CD4-positive, alpha-beta T cell (primary cell): ENCODE measurements at regions of chr17 and their contacts with region 1.

Region 1: GRCh38 chr17:36948717-36949460 is at the start of gene AATF:
- DNase-seq: peak; percentile 89 to 99 (median 95)
- ATAC-seq: peak; percentile 93
- H3K4me3 ChIP-seq: peak within 1 kb of the TSS; percentile 81
- H3K4me3 Mint-ChIP-seq: peak within 1 kb of the TSS; percentile 88
- H3K27ac ChIP-seq: peak within 1 kb of the TSS; percentile 62 to 74
- H3K27ac Mint-ChIP-seq: peak within 1 kb of the TSS; percentile 84
- H3K4me1 ChIP-seq: peaks cover 36% of the 10 kb centered on the region
- H3K4me1 Mint-ChIP-seq: peaks cover 70% of the 10 kb centered on the region
- H3K27me3 ChIP-seq: peaks cover 29 to 34% of the 10 kb centered on the region in 2 experiments
- H3K27me3 Mint-ChIP-seq: peaks cover 46% of the 10 kb centered on the region
- CTCF ChIP-seq: no peak
- total RNA-seq, gene AATF: 40.3 to 40.8 TPM

Region 2: DNA sequence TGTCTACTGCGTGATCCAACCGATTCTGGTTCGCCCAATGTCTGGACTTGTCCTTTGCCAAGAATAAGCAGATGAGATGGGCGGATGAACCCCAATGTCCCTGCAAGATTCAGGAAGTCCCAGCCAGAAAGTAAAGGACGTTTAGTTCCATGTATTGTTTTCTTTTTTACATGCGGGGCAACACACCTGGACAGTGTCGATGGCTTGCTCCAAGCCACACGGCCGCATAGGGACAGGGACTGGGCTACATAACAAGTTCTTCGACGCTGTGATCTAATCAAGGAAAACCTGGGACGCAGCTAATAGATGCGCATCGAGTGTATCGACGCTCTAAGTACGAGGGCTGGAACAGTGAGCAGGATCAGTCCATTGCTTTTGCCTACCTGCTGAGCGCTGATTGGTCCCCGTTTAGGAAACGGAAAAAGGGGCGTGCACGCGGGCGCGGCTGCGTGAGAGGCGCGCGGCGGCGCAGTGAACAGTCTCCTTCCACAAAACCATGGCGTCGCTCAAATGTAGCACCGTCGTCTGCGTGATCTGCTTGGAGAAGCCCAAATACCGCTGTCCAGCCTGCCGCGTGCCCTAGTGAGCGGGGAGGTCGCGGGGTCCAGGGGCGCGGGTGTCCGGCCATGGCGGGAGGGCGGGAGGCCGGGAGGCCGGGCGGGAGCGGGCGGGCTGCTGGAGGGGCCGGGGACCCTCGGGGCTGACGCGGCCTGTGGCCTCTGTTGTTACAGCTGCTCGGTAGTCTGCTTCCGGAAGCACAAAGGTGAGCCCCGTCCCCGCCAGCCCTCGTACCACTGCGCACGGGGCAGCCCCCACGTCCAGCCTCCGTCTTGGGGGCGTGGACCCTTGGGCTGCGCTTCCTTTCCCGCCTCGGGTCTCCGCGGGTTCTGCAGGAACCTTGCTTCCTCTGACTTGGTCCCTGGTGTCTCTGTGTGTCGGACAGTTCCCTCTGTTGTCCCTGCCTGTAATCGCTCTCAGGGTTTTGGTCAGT is 462.4 kb before region 1 on chr17 and contains the start of gene ZNHIT3:
- CTCF ChIA-PET with region 1: no interaction called
- POLR2A ChIA-PET with region 1: no interaction called
- intact Hi-C with region 1: loop called in 1 of 2 experiments (anchors 5 kb)
- DNase-seq: peak; percentile 81 to 96 (median 86)
- ATAC-seq: peak; percentile 95
- H3K4me3 ChIP-seq: peak within 1 kb of the TSS; percentile 99
- H3K4me3 Mint-ChIP-seq: peak within 1 kb of the TSS; percentile 99
- H3K27ac ChIP-seq: peak within 1 kb of the TSS; percentile 41 to 60
- H3K27ac Mint-ChIP-seq: peak within 1 kb of the TSS; percentile 88
- H3K4me1 ChIP-seq: peaks cover 52% of the 10 kb centered on the region
- H3K4me1 Mint-ChIP-seq: peaks cover 44% of the 10 kb centered on the region
- H3K27me3 ChIP-seq: peaks cover 8 to 10% of the 10 kb centered on the region in 2 experiments
- H3K27me3 Mint-ChIP-seq: peaks cover 10% of the 10 kb centered on the region
- CTCF ChIP-seq: no peak
- total RNA-seq, gene ZNHIT3: 70.2 to 73.9 TPM

Region 3: DNA sequence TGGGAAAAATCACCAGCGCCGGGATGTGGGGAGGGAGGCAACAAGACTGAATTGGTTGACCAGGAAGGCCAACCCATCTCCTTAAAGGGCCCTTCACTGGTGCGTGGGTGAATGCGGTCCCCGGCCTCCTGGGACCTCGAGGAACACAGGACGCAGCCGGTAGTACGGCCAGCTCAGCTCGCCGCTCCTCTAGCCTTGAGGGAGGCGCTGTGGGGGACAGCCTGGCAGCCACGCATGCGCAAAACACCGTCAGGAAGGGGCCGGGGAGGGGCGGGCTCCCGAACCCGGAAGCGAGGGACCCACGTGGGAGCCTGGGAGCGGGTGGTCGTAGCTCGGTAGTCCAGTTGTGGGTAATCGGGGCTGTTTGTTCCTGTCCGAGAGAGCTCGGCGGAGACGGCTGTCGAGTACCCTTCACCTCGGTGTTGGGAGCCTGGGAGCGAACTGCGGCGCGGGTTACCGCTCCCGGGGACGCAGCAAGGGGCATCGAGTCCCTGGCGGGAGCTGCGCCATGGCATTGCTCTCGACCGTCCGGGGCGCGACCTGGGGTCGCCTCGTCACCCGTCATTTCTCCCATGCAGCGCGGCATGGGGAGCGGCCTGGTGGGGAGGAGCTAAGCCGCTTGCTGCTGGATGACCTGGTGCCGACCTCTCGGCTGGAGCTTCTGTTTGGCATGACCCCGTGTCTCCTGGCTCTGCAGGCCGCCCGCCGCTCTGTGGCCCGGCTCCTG is 347.4 kb before region 1 on chr17 and contains the start of gene MRM1:
- CTCF ChIA-PET with region 1: no interaction called
- POLR2A ChIA-PET with region 1: interaction called, 13 read pairs
- intact Hi-C with region 1: no loop called
- DNase-seq: peak; percentile 80 to 94 (median 87)
- ATAC-seq: peak; percentile 74
- H3K4me3 ChIP-seq: peak within 1 kb of the TSS; percentile 89
- H3K4me3 Mint-ChIP-seq: peak within 1 kb of the TSS; percentile 97
- H3K27ac ChIP-seq: peak within 1 kb of the TSS; percentile 57 to 65
- H3K27ac Mint-ChIP-seq: peak within 1 kb of the TSS; percentile 94
- H3K4me1 ChIP-seq: peaks cover 31% of the 10 kb centered on the region
- H3K4me1 Mint-ChIP-seq: peaks cover 47% of the 10 kb centered on the region
- H3K27me3 ChIP-seq: no peaks in the 10 kb centered on the region
- H3K27me3 Mint-ChIP-seq: no peaks in the 10 kb centered on the region
- CTCF ChIP-seq: no peak
- total RNA-seq, gene MRM1: 0.81 to 1.1 TPM

Region 4: DNA sequence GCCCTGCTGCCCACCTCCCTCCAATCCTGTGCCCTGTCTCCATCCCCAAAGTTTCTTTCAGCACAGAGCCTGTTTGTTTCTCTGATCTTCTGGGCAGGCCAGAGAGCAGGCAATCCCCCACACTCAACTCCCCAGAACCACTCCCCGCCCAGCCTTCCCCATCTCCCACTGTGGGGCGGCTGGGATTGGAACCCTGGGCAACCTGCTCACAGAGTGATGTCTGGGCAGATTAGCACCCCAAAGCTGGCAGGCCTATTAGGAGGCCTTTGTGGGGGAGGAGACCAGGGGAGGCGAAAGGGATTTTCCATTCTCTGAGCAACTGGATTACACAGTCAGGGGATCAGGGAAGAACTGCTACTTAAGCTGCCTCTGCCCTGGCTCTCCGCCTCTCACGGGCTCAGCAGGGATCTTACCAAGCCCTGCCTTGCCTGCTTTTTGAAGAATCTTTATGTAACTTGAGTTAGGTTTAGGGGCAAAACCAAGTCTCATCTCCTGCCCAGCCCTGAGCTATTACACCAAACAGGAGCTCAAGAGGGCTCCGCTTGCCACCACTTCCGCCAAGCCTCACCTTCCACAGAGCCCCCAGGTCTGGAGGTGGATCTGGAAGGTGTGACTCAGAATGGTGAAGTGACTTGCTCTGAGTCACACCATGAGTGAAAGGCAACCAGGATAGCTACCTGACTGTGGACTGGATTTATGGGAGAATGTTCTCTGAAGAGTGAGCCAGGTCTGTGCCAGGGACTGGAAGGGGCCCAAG is 27.6 kb before region 1 on chr17:
- CTCF ChIA-PET with region 1: no interaction called
- POLR2A ChIA-PET with region 1: no interaction called
- intact Hi-C with region 1: no loop called
- DNase-seq: no peak
- ATAC-seq: no peak
- H3K4me3 ChIP-seq: no peak overlapping the region
- H3K4me3 Mint-ChIP-seq: no peak overlapping the region
- H3K27ac ChIP-seq: no peak overlapping the region
- H3K27ac Mint-ChIP-seq: no peak overlapping the region
- H3K4me1 ChIP-seq: no peaks in the 10 kb centered on the region
- H3K4me1 Mint-ChIP-seq: no peaks in the 10 kb centered on the region
- H3K27me3 ChIP-seq: peaks cover 20 to 28% of the 10 kb centered on the region in 2 experiments
- H3K27me3 Mint-ChIP-seq: peaks cover 73% of the 10 kb centered on the region
- CTCF ChIP-seq: no peak

Region 5: GRCh38 chr17:36931697-36932382 is 17.0 kb before region 1 on chr17:
- CTCF ChIA-PET with region 1: interaction called, 3 read pairs
- POLR2A ChIA-PET with region 1: interaction called, 13 read pairs
- intact Hi-C with region 1: loop called in 1 of 2 experiments (anchors 2 kb)
- DNase-seq: peak in 3 of 14 experiments; percentile 3 to 35 (median 24)
- ATAC-seq: no peak
- H3K4me3 ChIP-seq: no peak overlapping the region
- H3K4me3 Mint-ChIP-seq: peak overlapping the region; percentile 61
- H3K27ac ChIP-seq: no peak overlapping the region
- H3K27ac Mint-ChIP-seq: no peak overlapping the region
- H3K4me1 ChIP-seq: peaks cover 61% of the 10 kb centered on the region
- H3K4me1 Mint-ChIP-seq: peaks cover 66% of the 10 kb centered on the region
- H3K27me3 ChIP-seq: peaks cover 94 to 98% of the 10 kb centered on the region in 2 experiments
- H3K27me3 Mint-ChIP-seq: peaks cover 96% of the 10 kb centered on the region
- CTCF ChIP-seq: no peak

Region 6: DNA sequence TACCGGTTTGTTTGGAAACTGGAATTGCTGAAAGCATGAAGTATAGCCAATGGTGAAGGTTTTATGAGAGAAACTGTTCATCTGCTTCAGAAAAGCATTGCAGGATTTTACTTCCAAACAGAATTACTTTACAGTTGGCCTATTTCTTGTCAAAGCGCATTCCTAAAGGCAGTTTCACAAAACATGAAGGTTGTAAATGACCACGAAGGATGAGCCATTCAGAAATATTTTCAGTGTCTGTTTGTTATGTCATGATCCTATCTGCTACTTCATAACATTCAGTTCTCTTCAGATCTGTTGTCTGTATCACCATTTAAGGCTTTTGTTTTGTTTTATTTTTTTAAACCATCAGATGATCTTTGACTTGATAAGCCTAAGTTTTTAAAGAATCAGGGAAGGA is 45.5 kb after region 1 on chr17:
- CTCF ChIA-PET with region 1: no interaction called
- POLR2A ChIA-PET with region 1: no interaction called
- intact Hi-C with region 1: no loop called
- DNase-seq: no peak
- ATAC-seq: no peak
- H3K4me3 ChIP-seq: no peak overlapping the region
- H3K4me3 Mint-ChIP-seq: no peak overlapping the region
- H3K27ac ChIP-seq: no peak overlapping the region
- H3K27ac Mint-ChIP-seq: no peak overlapping the region
- H3K4me1 ChIP-seq: no peaks in the 10 kb centered on the region
- H3K4me1 Mint-ChIP-seq: peaks cover 6% of the 10 kb centered on the region
- H3K27me3 ChIP-seq: no peaks in the 10 kb centered on the region
- H3K27me3 Mint-ChIP-seq: no peaks in the 10 kb centered on the region
- CTCF ChIP-seq: no peak

Region 7: DNA sequence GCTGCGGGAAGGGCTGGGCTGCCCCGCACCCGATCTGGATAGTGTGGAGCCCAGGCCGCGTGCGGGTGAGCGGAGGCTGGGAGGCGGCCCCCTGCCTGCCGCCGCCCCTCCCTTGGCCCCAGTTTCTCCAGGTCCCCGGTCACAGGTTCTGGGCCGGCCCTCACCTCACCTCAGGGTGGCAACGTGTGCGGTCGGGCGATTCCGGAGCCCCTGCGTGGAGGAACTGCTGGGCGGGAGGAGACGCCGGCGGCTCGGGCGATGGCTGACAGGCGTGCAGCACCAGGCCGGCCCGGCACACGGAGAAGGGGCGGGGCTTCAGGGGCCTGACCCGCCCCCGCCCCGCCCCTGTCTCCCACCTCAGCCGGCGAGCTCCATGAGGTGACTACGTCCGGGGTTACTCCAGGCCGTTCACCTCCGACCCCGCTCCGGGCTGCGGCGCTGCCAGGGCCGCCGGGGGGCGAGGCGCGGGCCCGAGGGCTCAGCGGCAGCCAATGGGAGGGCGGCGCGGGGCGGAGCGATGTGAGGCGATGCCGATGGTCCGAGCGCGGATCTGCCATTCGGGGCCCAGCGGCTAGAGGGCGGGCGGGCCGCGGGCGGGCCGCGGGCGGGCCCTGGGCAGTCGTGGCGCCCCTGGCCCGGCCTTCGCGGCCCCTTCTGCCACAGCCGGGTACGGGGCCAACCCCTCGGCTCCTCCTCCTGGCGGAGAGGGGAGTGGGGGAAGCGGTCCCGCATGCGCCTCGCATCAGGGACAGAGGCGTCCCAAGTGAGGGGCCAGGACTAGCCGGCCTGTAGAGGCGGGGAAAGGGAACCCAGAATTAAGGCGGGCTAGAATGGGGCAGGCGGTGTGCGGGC is 410.2 kb after region 1 on chr17:
- CTCF ChIA-PET with region 1: no interaction called
- POLR2A ChIA-PET with region 1: no interaction called
- intact Hi-C with region 1: loop called in 1 of 2 experiments (anchors 5 kb)
- DNase-seq: peak; percentile 73 to 96 (median 84)
- ATAC-seq: peak; percentile 95
- H3K4me3 ChIP-seq: peak overlapping the region; percentile 74
- H3K4me3 Mint-ChIP-seq: peak overlapping the region; percentile 93
- H3K27ac ChIP-seq: peak overlapping the region; percentile 41 to 63
- H3K27ac Mint-ChIP-seq: peak overlapping the region; percentile 89
- H3K4me1 ChIP-seq: peaks cover 16% of the 10 kb centered on the region
- H3K4me1 Mint-ChIP-seq: peaks cover 22% of the 10 kb centered on the region
- H3K27me3 ChIP-seq: no peaks in the 10 kb centered on the region
- H3K27me3 Mint-ChIP-seq: no peaks in the 10 kb centered on the region
- CTCF ChIP-seq: no peak

Region 8: GRCh38 chr17:37489197-37490001 is 540.5 kb after region 1 on chr17 and contains the start of gene DUSP14:
- CTCF ChIA-PET with region 1: no interaction called
- POLR2A ChIA-PET with region 1: no interaction called
- intact Hi-C with region 1: loop called in 1 of 2 experiments (anchors 5 kb)
- DNase-seq: peak; percentile 69 to 94 (median 83)
- ATAC-seq: peak; percentile 78
- H3K4me3 ChIP-seq: peak within 1 kb of the TSS; percentile 96
- H3K4me3 Mint-ChIP-seq: peak within 1 kb of the TSS; percentile 98
- H3K27ac ChIP-seq: peak within 1 kb of the TSS; percentile 59 to 64
- H3K27ac Mint-ChIP-seq: peak within 1 kb of the TSS; percentile 91
- H3K4me1 ChIP-seq: peaks cover 29% of the 10 kb centered on the region
- H3K4me1 Mint-ChIP-seq: peaks cover 30% of the 10 kb centered on the region
- H3K27me3 ChIP-seq: no peaks in the 10 kb centered on the region
- H3K27me3 Mint-ChIP-seq: no peaks in the 10 kb centered on the region
- CTCF ChIP-seq: no peak
- total RNA-seq, gene DUSP14: 4.4 to 4.9 TPM